ENCODE measurements at regions of chr2 and their contacts with region 1.

Region 1: DNA sequence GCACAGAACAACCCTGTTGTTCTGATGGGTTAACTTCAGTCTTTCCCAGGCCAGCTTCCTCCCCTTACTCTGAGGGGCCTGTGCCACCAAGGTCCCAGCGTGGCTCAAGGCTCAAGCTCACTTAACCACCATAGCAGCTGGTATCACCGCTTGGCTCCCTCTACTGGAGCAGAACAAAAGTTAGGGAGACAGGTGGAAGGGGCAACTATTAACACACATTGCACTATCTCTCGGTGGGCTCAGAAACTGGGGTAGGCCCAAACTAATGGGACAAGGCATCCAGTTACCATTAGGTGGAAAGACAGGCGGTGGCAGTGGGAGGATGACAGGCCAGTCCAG is 88.7 kb upstream of the ATL2 start:
- DNase-seq: no peak
- H3K4me3 ChIP-seq: no peak overlapping the region
- H3K27ac ChIP-seq: no peak overlapping the region
- H3K27me3 ChIP-seq: peaks cover 10% of the 10 kb centered on the region
- CTCF ChIP-seq: peak; percentile 44

Region 2: GRCh38 chr2:38323623-38324022 is 142.1 kb before region 1 on chr2:
- CTCF ChIA-PET with region 1: interaction called, 10 read pairs
- POLR2A ChIA-PET with region 1: no interaction called
- DNase-seq: no peak
- H3K4me3 ChIP-seq: no peak overlapping the region
- H3K27ac ChIP-seq: no peak overlapping the region
- H3K27me3 ChIP-seq: no peaks in the 10 kb centered on the region
- CTCF ChIP-seq: no peak

Region 3: DNA sequence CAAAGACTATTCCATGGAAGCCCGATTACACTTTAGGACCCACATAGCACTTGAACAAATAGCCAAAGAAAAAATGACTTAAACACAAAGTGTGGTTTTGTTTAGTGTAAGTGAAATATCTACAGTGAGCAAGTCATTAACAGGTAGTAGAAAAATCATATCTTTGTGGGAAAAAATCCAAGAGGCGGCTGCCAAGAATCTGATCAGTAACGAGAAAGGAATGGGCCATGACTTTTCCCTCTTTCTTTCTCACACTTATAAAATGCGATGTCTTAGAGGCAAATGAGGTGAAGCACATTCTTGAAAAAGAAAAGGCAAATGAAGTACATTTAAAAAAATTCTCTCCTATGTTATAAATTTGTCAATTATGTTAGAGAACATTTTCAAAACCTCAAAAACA is 299.4 kb after region 1 on chr2:
- CTCF ChIA-PET with region 1: no interaction called
- POLR2A ChIA-PET with region 1: no interaction called
- DNase-seq: peak; percentile 32
- H3K4me3 ChIP-seq: no peak overlapping the region
- H3K27ac ChIP-seq: no peak overlapping the region
- H3K27me3 ChIP-seq: no peaks in the 10 kb centered on the region
- CTCF ChIP-seq: no peak

Measured in AG04450 (cell line).